Naive thymus-derived CD8-positive, alpha-beta T cell (primary cell): ENCODE measurements at regions of chr17 and their contacts with region 1.

Region 1: GRCh38 chr17:14203388-14203787 is 33.3 kb downstream of the CDRT15 start:
- DNase-seq: peak in 7 of 10 donors; percentile 32 to 76 (median 54)
- ATAC-seq: peak; percentile 41 to 51
- H3K4me3 Mint-ChIP-seq: peak overlapping the region; percentile 13 to 70 (median 44)
- H3K27ac Mint-ChIP-seq: peak overlapping the region; percentile 86 to 100 (median 92)
- H3K4me1 Mint-ChIP-seq: peaks cover 59 to 93% (median 87%) of the 10 kb centered on the region in 4 donors
- H3K27me3 Mint-ChIP-seq: no peaks in the 10 kb centered on the region

Region 2: DNA sequence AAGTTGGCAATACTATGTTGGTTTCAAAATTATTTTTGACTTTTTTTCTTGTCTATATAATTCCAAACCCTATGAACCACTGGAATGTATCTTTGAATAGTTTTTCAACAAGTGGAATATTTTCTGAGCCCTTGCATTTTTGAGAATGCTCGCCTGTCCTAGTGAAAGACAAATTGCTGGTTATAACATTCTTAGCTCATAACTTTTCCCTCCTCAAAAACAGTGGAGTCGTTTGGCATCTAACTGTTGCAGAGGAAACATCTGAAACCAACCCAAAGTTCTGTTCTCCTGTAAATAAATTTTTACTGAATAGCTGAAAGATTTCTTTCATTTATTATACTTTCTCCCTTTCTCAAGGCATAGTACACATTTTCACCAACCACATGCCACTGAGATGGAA is 145.3 kb before region 1 on chr17:
- POLR2A ChIA-PET with region 1: no interaction called
- DNase-seq: no peak
- ATAC-seq: no peak
- H3K4me3 Mint-ChIP-seq: no peak overlapping the region
- H3K27ac Mint-ChIP-seq: no peak overlapping the region
- H3K4me1 Mint-ChIP-seq: peaks cover 0 to 14% (median 9%) of the 10 kb centered on the region in 4 donors
- H3K27me3 Mint-ChIP-seq: no peaks in the 10 kb centered on the region

Region 3: DNA sequence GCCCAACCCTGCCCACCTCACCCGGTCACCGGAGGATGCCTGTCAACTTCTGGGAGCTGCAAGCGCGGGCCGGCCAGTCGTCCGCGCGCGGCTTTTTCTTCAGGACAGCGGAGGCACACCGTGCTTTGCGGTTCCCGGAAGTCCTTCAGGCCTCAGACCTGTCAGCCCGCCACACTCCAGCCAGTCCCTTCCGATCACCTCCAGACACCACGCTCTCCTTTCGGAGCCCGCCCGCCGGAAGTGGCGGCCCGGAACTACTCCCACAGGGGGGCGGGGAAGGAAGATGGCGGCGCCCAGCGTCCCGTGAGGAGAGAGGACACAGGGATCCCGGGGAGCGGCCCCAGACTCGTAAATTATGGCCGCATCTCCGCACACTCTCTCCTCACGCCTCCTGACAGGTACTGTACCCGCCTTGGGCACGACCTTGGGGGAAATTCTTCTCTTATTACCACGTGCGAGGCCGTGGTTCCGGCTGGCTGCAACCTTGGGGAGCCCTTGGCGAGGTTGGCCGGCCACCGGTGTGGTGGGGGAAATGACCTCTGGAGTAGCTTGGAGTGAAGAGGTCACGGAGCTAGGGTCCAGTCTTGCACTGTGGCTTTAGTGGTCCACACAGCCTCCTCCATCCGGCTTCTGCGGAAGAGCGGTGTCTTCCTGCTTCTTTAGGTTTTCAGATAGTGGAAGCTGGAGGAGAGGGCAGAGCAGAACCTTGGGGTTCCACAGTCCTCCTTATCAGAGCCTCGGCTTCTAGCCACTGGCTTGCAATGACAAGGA is 134.0 kb before region 1 on chr17 and contains the start of gene COX10:
- POLR2A ChIA-PET with region 1: interaction called, 11 read pairs
- DNase-seq: peak; percentile 68 to 90 (median 77)
- ATAC-seq: peak; percentile 98
- H3K4me3 Mint-ChIP-seq: peak within 1 kb of the TSS; percentile 92 to 97 (median 94)
- H3K27ac Mint-ChIP-seq: peak within 1 kb of the TSS; percentile 87 to 97 (median 96)
- H3K4me1 Mint-ChIP-seq: peaks cover 27 to 58% (median 48%) of the 10 kb centered on the region in 4 donors
- H3K27me3 Mint-ChIP-seq: no peaks in the 10 kb centered on the region
- polyA plus RNA-seq, gene COX10: 18.5 to 24.5 (median 23.3) TPM

Region 4: DNA sequence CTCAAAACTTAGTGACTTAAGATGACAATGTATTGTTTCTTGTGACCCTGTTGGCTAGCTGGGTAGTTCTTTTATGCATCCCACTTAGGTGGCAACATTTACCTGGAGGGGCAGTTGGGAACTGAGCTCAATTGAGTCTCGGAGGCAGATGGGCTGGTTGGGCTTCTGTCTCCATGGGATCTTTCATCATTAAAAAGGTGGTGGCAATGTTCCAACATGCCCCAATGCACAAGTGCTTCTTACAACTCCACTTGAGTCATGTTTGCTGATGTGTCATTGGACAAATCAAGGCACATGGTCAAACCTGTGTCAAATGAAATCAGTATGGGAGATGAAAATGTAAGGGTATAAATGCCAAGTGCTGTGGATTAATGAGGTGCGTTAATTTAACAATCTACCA is 85.8 kb after region 1 on chr17:
- POLR2A ChIA-PET with region 1: no interaction called
- DNase-seq: no peak
- ATAC-seq: no peak
- H3K4me3 Mint-ChIP-seq: no peak overlapping the region
- H3K27ac Mint-ChIP-seq: no peak overlapping the region
- H3K4me1 Mint-ChIP-seq: peaks cover 0 to 6% (median 0%) of the 10 kb centered on the region in 4 donors
- H3K27me3 Mint-ChIP-seq: peaks cover 5 to 47% (median 38%) of the 10 kb centered on the region in 5 donors